ENCODE measurements at regions of chr9 and their contacts with region 1.

Region 1: DNA sequence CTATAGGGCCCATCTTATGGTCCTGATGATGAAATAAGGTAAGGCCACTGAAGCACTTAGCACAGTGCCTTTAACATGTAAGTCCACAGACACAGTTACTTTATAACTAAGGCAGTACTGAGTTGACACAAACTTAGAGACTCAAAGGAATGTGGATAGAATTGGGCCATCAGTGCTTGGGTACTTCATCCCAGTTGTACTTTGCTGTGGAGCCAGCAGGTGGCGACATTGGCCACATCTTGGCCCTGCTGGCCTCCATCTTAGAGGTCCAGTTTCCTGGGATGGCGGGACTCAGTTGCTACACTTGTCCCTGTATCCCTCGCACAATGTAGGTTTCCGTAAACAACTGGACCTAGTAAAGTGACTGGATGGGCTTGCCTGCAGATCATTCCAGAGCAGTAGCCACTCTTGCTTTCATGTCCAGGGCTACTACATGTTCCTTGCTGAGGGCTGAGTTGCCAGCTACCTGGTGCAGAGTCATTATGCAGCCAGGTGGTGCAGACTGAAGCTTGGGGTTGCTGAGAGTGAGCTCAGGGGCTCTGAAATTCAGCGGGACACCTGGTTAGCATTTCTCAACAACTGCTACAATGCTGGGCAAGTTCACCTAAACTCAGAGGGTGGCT is 10.6 kb downstream of the MTAP start:
- DNase-seq: peak; percentile 78
- ATAC-seq: peak; percentile 78
- H3K4me3 Mint-ChIP-seq: no peak overlapping the region
- H3K27ac Mint-ChIP-seq: no peak overlapping the region
- H3K4me1 Mint-ChIP-seq: peaks cover 32% of the 10 kb centered on the region
- H3K27me3 Mint-ChIP-seq: no peaks in the 10 kb centered on the region

Region 2: GRCh38 chr9:21688108-21689102 is 124.7 kb before region 1 on chr9:
- CTCF ChIA-PET with region 1: no interaction called
- POLR2A ChIA-PET with region 1: no interaction called
- DNase-seq: no peak
- ATAC-seq: no peak
- H3K4me3 Mint-ChIP-seq: peak overlapping the region; percentile 30
- H3K27ac Mint-ChIP-seq: peak overlapping the region; percentile 65
- H3K4me1 Mint-ChIP-seq: peaks cover 23% of the 10 kb centered on the region
- H3K27me3 Mint-ChIP-seq: no peaks in the 10 kb centered on the region

Region 3: DNA sequence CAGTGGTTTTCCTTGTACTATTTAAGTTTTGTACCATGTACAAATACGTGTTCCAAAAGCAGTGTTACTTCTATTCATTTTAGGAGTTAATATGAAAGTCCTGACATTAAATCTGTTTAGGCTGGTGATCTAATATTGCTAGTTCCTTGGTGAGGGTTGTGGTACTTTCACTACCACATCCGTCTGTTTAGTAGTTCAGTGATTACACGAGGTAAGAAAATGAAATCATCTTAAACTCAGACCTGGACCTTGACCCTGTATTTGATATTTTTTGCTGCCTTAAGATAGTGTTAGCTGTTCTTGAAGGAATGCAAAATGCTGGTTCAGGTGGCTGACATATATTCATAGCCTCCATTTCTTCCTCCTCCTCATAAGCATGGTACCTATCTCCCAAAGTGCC is 39.7 kb after region 1 on chr9:
- CTCF ChIA-PET with region 1: no interaction called
- POLR2A ChIA-PET with region 1: no interaction called
- DNase-seq: no peak
- ATAC-seq: no peak
- H3K4me3 Mint-ChIP-seq: no peak overlapping the region
- H3K27ac Mint-ChIP-seq: no peak overlapping the region
- H3K4me1 Mint-ChIP-seq: peaks cover 16% of the 10 kb centered on the region
- H3K27me3 Mint-ChIP-seq: no peaks in the 10 kb centered on the region

Region 4: DNA sequence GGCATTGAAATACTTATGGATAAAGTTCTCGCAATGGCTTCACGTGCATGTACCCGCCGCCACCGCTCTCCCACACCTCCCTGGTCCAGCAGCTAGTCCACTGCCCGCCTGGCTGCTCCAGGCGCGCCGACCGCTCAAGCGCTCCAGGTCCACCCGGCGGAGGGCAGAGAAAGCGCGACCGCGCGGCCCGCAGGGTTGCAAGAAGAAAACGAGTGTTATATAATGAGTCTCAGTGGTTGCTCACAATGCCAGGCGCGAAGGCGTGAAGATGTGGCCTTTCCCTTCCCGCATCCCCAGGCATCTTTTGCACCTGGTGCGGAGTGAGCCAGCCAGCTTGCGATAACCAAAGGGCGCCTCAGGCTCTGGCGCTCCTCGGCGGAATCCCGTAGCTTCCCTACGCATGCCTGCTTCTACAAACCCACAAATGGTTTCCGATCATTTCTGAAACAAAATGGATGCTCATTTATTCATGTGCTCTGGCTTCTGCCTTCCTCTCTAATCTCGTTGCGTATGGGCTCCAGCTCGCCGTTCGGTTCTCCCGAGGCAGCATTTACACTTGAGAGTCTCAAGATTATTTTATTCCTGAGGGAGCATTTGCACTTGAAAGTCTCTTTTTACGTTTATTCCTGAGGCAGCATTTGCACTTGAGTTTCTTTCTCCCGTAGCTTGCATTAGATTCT is 155.4 kb after region 1 on chr9:
- CTCF ChIA-PET with region 1: interaction called, 11 read pairs
- POLR2A ChIA-PET with region 1: no interaction called
- DNase-seq: peak; percentile 34
- ATAC-seq: no peak
- H3K4me3 Mint-ChIP-seq: peak overlapping the region; percentile 56
- H3K27ac Mint-ChIP-seq: peak overlapping the region; percentile 39
- H3K4me1 Mint-ChIP-seq: peaks cover 48% of the 10 kb centered on the region
- H3K27me3 Mint-ChIP-seq: peaks cover 87% of the 10 kb centered on the region

Region 5: DNA sequence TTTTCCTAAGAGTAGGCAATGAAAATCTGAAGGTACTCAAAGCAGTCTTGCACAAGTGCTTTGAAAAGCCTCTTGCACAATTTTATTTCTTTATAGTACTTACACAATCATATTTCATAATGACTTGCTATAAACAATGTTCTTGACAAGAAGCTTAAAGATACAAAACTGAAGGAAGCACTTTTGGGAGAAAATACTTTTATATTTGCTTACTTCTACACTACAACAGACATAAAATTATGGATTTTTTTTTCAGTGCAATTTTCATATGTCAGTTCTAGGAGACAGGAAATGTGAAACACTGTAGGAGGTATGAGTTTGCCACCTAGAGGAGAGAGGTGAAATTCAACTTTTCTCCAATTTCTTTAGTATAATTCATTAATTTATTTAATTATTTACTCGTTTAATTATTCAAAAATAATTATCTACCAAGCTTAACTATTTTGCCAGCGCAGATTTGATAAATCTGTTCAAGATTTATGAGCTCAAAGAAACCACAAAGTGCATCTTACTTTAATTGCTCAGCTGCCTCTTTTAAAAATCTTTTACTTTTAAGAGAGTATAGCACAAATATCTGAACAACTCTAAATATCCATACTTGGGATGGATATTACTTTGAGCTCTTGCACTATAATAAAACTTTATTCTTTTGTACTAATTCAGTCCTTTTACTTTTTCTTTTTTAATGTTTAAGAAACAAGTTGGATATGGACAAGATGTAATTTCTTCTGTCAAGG is 225.1 kb after region 1 on chr9:
- CTCF ChIA-PET with region 1: interaction called, 152 read pairs
- POLR2A ChIA-PET with region 1: no interaction called
- DNase-seq: no peak
- ATAC-seq: no peak
- H3K4me3 Mint-ChIP-seq: no peak overlapping the region
- H3K27ac Mint-ChIP-seq: no peak overlapping the region
- H3K4me1 Mint-ChIP-seq: peaks cover 58% of the 10 kb centered on the region
- H3K27me3 Mint-ChIP-seq: peaks cover 14% of the 10 kb centered on the region

Region 6: GRCh38 chr9:22119537-22120158 is 306.6 kb after region 1 on chr9:
- CTCF ChIA-PET with region 1: interaction called, 80 read pairs
- POLR2A ChIA-PET with region 1: no interaction called
- DNase-seq: peak; percentile 56
- ATAC-seq: peak; percentile 91
- H3K4me3 Mint-ChIP-seq: no peak overlapping the region
- H3K27ac Mint-ChIP-seq: no peak overlapping the region
- H3K4me1 Mint-ChIP-seq: peaks cover 35% of the 10 kb centered on the region
- H3K27me3 Mint-ChIP-seq: peaks cover 41% of the 10 kb centered on the region

Region 7: GRCh38 chr9:22244141-22245011 is 431.3 kb after region 1 on chr9:
- CTCF ChIA-PET with region 1: interaction called, 58 read pairs
- POLR2A ChIA-PET with region 1: no interaction called
- DNase-seq: peak; percentile 57
- ATAC-seq: peak; percentile 57
- H3K4me3 Mint-ChIP-seq: no peak overlapping the region
- H3K27ac Mint-ChIP-seq: no peak overlapping the region
- H3K4me1 Mint-ChIP-seq: peaks cover 22% of the 10 kb centered on the region
- H3K27me3 Mint-ChIP-seq: peaks cover 28% of the 10 kb centered on the region